Ovary (tissue), 10 donors: ENCODE measurements at regions of chr1 and their contacts with region 1.

Region 1: DNA sequence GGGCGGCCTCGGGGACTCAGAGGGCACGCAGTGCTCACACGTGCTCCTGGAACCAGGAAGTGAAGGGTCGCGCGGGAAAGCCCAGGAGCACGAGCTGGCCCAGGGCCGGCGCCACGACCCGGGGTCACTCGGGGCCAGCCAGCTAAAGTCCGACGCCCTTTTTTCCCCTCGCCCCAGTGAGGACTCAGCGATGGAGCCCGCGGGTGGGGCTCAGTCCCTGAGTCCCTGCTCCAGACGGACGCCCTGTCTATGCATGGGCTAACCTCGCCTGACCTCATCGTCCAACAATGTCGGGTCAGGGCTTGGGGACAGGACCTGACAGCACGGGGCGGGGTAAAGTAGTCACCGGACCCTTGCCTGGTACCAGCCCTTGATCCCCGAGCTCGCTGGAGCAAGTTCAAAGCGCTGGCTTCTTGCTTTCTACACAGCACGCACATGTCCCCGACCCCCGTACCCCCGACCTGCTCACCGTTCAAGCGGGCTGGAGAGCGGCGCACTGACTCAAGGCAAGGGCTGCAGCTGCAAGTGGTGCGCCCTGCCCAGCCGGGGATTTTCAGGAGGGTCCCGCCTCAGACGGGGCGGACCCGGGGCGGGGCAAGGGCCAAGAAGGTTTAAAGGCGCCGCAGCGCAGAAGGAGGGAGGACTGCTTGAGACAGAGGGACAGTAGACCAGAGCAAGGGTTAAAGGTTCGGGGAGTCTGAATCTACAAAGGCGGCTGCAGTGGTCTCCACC is at the start of gene TAGLN2:
- DNase-seq: peak; percentile 88 to 93 (median 90)
- H3K4me3 ChIP-seq: peak within 1 kb of the TSS; percentile 91
- H3K27ac ChIP-seq: peak within 1 kb of the TSS; percentile 80 to 94
- H3K4me1 ChIP-seq: peaks cover 20% of the 10 kb centered on the region
- H3K27me3 ChIP-seq: no peaks in the 10 kb centered on the region
- CTCF ChIP-seq: no peak
- EP300 ChIP-seq: no peak
- POLR2A ChIP-seq: peak; percentile 93
- total RNA-seq, gene TAGLN2: 81.8 to 202 (median 149) TPM

Region 2: GRCh38 chr1:159854693-159855192 is 70.4 kb before region 1 on chr1:
- intact Hi-C with region 1: loop called in 2 of 4 experiments (anchors 10 kb)
- DNase-seq: peak; percentile 89 to 94 (median 91)
- H3K4me3 ChIP-seq: peak overlapping the region; percentile 73
- H3K27ac ChIP-seq: peak overlapping the region; percentile 90 to 98
- H3K4me1 ChIP-seq: peaks cover 3% of the 10 kb centered on the region
- H3K27me3 ChIP-seq: no peaks in the 10 kb centered on the region
- CTCF ChIP-seq: peak in 2 of 3 donors; percentile 11 to 49
- EP300 ChIP-seq: no peak
- POLR2A ChIP-seq: peak; percentile 82

Region 3: GRCh38 chr1:159860426-159860825 is 64.7 kb before region 1 on chr1:
- intact Hi-C with region 1: loop called in 3 of 4 experiments (anchors 5 to 10 kb)
- DNase-seq: no peak
- H3K4me3 ChIP-seq: no peak overlapping the region
- H3K27ac ChIP-seq: peak overlapping the region in 1 of 2 donors; percentile 38
- H3K4me1 ChIP-seq: peaks cover 2% of the 10 kb centered on the region
- H3K27me3 ChIP-seq: no peaks in the 10 kb centered on the region
- CTCF ChIP-seq: no peak
- EP300 ChIP-seq: no peak
- POLR2A ChIP-seq: no peak

Region 4: DNA sequence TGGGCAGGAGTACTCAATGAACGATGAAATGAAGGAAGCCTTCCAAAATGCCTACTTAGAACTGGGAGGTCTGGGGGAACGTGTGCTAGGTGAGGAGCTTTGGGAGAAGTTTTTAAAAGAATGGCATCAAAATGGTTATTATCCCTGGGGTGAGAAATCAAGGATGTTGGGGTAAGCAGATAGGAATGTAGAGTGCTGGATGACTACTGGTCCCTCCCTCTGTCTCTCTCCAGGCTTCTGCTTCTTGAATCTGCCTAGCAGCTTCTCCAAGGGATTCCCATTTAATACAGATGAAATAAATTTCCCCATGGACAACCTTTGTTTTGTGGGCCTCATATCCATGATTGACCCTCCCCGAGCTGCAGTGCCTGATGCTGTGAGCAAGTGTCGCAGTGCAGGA is 246.2 kb after region 1 on chr1:
- intact Hi-C with region 1: no loop called
- DNase-seq: no peak
- H3K4me3 ChIP-seq: no peak overlapping the region
- H3K27ac ChIP-seq: no peak overlapping the region
- H3K4me1 ChIP-seq: no peaks in the 10 kb centered on the region
- H3K27me3 ChIP-seq: no peaks in the 10 kb centered on the region
- CTCF ChIP-seq: no peak
- EP300 ChIP-seq: no peak
- POLR2A ChIP-seq: no peak

Region 5: GRCh38 chr1:161399257-161399998 is 1474.3 kb after region 1 on chr1:
- intact Hi-C with region 1: loop called in 1 of 4 experiments (anchors 10 kb)
- DNase-seq: peak; percentile 86 to 95 (median 93)
- H3K4me3 ChIP-seq: peak overlapping the region; percentile 92
- H3K27ac ChIP-seq: peak overlapping the region; percentile 100
- H3K4me1 ChIP-seq: peaks cover 4% of the 10 kb centered on the region
- H3K27me3 ChIP-seq: no peaks in the 10 kb centered on the region
- CTCF ChIP-seq: peak in 2 of 3 donors; percentile 41 to 48
- EP300 ChIP-seq: peak; percentile 69
- POLR2A ChIP-seq: peak; percentile 69